Body of pancreas (tissue), 4 donors: ENCODE measurements at regions of chr19 and their contacts with region 1.

Region 1: DNA sequence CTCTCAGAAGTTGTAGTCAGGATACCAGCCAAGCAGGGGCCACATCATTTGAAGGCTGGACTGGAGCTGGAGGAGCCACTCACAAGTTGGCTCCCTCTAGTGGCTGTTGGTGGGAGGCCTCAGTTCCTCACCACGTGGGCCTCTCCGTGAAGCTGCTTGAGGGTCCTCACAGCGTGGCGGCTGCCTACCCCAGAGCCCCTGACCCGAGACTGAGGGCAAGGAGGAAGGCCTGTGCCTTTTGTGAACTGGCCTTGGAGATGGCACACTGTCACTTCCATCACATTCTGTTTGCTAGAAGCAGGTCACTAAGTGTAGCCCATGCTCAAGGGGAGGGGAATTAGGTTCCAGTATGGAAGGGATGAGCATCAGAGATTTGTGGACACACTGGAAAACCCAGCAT is 14.6 kb downstream of the GNA11 start:
- DNase-seq: peak; percentile 63 to 70 (median 64)
- ATAC-seq: peak; percentile 47
- H3K4me3 ChIP-seq: no peak overlapping the region
- H3K27ac ChIP-seq: no peak overlapping the region
- H3K4me1 ChIP-seq: peaks cover 14% of the 10 kb centered on the region
- H3K27me3 ChIP-seq: no peaks in the 10 kb centered on the region
- CTCF ChIP-seq: peak; percentile 58 to 78 (median 66)
- POLR2A ChIP-seq: no peak

Region 2: DNA sequence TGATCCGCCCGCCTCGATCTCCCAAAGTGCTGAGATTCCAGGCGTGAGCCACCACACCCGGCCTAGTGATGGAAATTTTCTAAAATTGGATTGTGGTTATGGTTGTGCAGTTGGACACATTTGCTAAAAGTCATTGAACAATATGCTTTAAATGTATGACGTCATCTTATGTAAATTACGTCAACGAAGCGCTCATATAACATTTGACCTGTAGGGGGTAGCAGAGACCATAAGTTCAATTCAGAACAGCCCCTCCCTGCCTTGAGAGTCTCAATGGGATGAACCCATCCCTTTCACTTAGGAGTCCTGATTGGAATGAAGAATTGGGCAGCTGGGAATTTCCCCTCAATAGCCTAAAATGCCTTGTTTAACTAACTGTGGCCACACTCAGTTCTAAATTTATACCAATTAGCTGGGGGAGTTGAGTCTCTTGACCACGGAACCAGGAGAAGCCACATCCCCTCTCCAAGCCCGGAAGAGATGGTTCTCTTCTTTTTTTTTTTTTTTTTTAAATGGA is 146.7 kb before region 1 on chr19:
- intact Hi-C with region 1: loop called (anchors 5 kb)
- DNase-seq: peak; percentile 58 to 84 (median 70)
- ATAC-seq: peak; percentile 92
- H3K4me3 ChIP-seq: no peak overlapping the region
- H3K27ac ChIP-seq: peak overlapping the region in 1 of 4 donors; percentile 15
- H3K4me1 ChIP-seq: peaks cover 7% of the 10 kb centered on the region
- H3K27me3 ChIP-seq: no peaks in the 10 kb centered on the region
- CTCF ChIP-seq: peak; percentile 37 to 98 (median 95)
- POLR2A ChIP-seq: no peak

Region 3: GRCh38 chr19:3073159-3073563 is 35.6 kb before region 1 on chr19:
- intact Hi-C with region 1: loop called (anchors 5 kb)
- DNase-seq: peak in 2 of 4 donors; percentile 45 to 48
- ATAC-seq: peak; percentile 24
- H3K4me3 ChIP-seq: no peak overlapping the region
- H3K27ac ChIP-seq: no peak overlapping the region
- H3K4me1 ChIP-seq: peaks cover 9% of the 10 kb centered on the region
- H3K27me3 ChIP-seq: no peaks in the 10 kb centered on the region
- CTCF ChIP-seq: no peak
- POLR2A ChIP-seq: no peak